ENCODE measurements at regions of chr2 and their contacts with region 1.

Region 1: DNA sequence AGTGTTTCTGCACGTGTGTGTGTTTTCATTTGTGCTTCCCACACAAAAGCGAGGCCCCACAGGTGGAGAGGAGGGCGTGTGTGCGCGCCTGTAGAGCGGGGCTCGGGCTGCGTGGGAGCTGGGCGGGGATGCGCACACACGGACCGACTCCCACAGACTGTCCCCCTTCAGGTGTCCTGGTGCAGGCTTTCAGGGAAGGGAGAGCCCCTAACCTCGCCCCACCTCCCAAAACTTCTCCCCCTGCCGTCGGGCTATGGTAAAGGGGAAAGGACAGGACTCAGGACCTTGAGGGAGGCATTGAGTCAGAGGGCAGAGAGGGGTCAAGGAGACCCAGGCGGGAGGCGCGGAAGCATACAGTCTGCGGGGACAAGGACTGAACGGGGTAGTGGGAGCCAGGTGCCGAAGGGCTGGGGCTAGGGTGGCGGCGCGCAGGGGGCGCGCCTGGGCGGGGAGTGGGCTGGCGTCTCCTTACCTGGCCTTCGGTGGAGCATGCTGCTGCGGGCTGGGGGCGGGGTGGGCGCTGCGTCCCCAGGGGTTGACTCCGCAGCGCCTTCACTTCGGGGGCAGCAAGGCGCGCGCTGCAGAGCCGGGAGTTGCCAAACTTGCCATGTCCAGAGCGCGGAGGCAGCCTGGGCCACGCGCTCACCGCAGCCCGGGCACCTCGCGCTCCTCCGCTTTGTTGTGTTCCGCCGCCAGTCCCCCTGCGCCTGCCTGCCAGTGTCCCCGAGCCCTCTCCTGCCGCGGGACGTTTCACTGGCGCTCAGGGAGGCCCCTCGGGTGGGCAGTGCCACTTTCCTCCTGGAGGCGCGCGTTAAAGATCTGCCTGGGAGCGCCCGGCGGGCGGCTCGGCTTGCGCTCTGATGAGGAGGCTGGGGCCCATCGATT is 302.0 kb downstream of the NCKAP5 start:
- DNase-seq: peak; percentile 69
- H3K4me3 ChIP-seq: peak overlapping the region; percentile 81
- H3K27ac ChIP-seq: peak overlapping the region; percentile 81
- H3K4me1 ChIP-seq: peaks cover 50% of the 10 kb centered on the region
- H3K27me3 ChIP-seq: no peaks in the 10 kb centered on the region
- CTCF ChIP-seq: peak; percentile 47

Region 2: DNA sequence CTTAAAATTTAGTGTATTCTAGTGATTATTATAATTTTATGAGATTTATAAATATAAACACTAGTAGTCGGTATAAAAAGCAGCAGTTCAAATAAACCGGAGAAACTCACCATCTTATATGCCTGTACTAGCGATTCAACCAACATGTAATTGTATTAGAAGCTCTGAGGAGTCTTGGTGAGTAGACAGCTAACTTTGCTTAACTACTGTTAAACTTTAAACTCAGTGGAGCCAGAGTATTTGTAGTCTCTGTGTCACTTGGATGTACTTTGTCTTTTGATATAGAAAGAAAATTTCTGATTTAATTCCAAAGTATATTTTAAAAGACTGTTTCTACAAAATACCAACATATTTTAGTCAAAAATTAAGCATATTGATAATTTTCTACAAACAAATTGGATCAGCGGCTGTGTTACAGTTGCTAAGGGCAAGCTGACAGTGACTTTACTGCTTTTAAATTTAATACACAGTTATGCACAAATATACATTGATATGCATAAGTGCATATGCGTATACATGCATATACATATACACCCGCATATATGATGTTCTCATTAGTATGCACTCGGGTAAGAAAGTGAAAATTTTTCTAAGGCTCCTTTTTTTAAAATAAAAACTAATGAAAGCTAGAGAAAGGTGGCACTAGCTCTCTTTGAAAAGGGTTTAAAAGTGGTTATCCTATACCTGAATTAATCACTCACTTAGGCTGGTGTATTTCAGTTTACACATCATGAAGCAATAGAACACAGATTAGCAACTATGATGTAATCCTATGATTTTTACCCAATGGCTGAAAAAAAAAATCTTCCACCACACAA is 72.5 kb before region 1 on chr2:
- CTCF ChIA-PET with region 1: no interaction called
- POLR2A ChIA-PET with region 1: no interaction called
- intact Hi-C with region 1: no loop called
- DNase-seq: no peak
- H3K4me3 ChIP-seq: no peak overlapping the region
- H3K27ac ChIP-seq: no peak overlapping the region
- H3K4me1 ChIP-seq: peaks cover 19% of the 10 kb centered on the region
- H3K27me3 ChIP-seq: no peaks in the 10 kb centered on the region
- CTCF ChIP-seq: no peak

Region 3: GRCh38 chr2:133421516-133422312 is 155.4 kb after region 1 on chr2:
- CTCF ChIA-PET with region 1: no interaction called
- POLR2A ChIA-PET with region 1: no interaction called
- intact Hi-C with region 1: loop called (anchors 5 kb)
- DNase-seq: no peak
- H3K4me3 ChIP-seq: no peak overlapping the region
- H3K27ac ChIP-seq: no peak overlapping the region
- H3K4me1 ChIP-seq: peaks cover 49% of the 10 kb centered on the region
- H3K27me3 ChIP-seq: no peaks in the 10 kb centered on the region
- CTCF ChIP-seq: 0 out of 2 replicates have a peak, but pooled peaks have one; percentile 14

Region 4: DNA sequence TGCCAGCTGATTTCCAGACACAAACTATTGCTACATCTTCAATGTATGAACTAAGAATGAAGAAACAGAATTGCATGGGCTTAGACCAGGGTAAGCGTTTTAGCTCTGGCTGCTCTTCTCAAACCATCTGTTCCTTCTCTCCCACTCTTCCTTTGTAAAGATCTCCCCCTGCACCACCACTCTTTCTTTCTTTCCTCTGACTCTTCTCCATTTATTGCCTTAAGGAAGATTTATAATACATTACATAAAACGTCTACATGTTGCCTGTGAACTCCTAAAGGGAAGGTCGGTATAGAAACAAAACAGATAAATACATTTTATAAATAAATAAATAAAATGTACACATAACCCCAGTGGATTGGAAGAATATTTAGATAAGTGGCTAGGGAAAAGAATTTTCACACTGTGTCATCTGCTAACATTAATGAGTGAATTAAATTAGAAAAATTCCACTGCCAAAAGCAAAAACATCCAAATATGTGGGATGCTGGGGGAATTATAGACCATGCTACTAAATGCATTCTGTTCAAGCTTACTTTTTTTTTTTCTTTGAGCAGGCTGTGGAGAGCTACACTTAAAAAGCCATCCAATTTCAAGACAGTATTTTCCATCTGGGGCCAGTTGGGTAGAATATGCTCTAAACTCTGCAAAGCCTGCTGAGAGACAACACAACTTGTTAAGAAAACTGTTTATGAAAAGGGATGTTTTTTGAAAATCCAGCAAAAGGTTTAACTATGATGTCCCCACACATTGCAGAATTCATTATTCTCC is 260.4 kb after region 1 on chr2:
- CTCF ChIA-PET with region 1: no interaction called
- POLR2A ChIA-PET with region 1: no interaction called
- intact Hi-C with region 1: loop called (anchors 10 kb)
- DNase-seq: peak; percentile 92
- H3K4me3 ChIP-seq: no peak overlapping the region
- H3K27ac ChIP-seq: peak overlapping the region; percentile 98
- H3K4me1 ChIP-seq: peaks cover 73% of the 10 kb centered on the region
- H3K27me3 ChIP-seq: no peaks in the 10 kb centered on the region
- CTCF ChIP-seq: no peak

Region 5: GRCh38 chr2:133633881-133634409 is 367.7 kb after region 1 on chr2:
- CTCF ChIA-PET with region 1: no interaction called
- POLR2A ChIA-PET with region 1: no interaction called
- intact Hi-C with region 1: no loop called
- DNase-seq: peak; percentile 55
- H3K4me3 ChIP-seq: no peak overlapping the region
- H3K27ac ChIP-seq: no peak overlapping the region
- H3K4me1 ChIP-seq: peaks cover 6% of the 10 kb centered on the region
- H3K27me3 ChIP-seq: no peaks in the 10 kb centered on the region
- CTCF ChIP-seq: no peak

Region 6: DNA sequence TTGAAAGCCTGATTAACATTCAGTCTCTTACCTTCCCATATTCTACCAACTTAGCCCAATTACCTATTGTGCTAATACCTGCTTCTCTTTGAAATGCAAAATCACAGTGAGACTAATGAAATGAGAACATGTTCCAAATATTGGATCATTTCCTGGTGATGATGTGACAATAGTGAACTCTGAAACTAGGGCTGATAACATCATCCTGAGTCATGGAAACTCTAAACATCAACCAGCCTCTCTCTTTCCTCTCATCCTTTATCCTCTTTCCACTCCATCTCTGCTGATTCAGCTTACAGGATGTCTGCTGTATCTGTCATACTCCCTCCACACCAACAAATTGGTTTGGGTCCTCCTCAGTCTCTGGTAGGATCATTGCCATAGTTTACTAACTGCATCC is 400.8 kb after region 1 on chr2:
- CTCF ChIA-PET with region 1: no interaction called
- POLR2A ChIA-PET with region 1: no interaction called
- intact Hi-C with region 1: no loop called
- DNase-seq: no peak
- H3K4me3 ChIP-seq: no peak overlapping the region
- H3K27ac ChIP-seq: no peak overlapping the region
- H3K4me1 ChIP-seq: no peaks in the 10 kb centered on the region
- H3K27me3 ChIP-seq: no peaks in the 10 kb centered on the region
- CTCF ChIP-seq: no peak